ENCODE measurements at regions of chr9 and their contacts with region 1.

Region 1: GRCh38 chr9:87497604-87498045 is at the start of gene DAPK1:
- DNase-seq: no peak
- ATAC-seq: peak; percentile 75
- H3K4me3 ChIP-seq: peak within 1 kb of the TSS; percentile 82
- H3K27ac ChIP-seq: peak within 1 kb of the TSS; percentile 85
- H3K4me1 ChIP-seq: peaks cover 11% of the 10 kb centered on the region
- H3K27me3 ChIP-seq: no peaks in the 10 kb centered on the region
- CTCF ChIP-seq: peak in 2 of 3 experiments; percentile 34 to 39; a peak in 2 of 6 replicates
- EP300 ChIP-seq: 0 out of 4 replicates have a peak, but pooled peaks of 1 of the 2 experiments have one; percentile 24
- POLR2A ChIP-seq: peak; percentile 75
- RAD21 ChIP-seq: no peak
- polyA plus RNA-seq, gene DAPK1: 8.2 to 10.4 TPM

Region 2: DNA sequence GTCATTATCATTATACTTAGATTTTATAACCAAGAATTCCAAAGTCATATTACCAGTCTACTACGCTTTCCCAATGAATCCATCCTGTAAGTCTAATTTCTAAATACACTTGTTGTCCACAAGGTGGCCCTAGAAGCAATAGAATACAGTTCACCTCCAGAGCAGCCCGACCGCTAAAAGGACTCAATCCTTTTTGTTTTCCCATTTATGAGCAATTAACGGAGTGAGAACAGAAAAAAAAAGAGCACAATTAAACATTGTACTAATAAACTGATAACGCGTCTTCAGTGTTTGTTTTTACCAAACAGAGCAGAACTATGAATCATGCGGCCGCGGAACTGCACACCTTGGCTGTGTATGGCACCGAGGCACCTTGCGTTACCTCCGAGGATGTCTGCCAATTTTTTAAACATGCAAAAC is 160.7 kb before region 1 on chr9:
- CTCF ChIA-PET with region 1: interaction called, 6 read pairs
- POLR2A ChIA-PET with region 1: no interaction called
- RAD21 ChIA-PET with region 1: interaction called, 4 read pairs
- SMC1A ChIA-PET with region 1: interaction called, 11 read pairs
- in situ Hi-C with region 1: no loop called
- intact Hi-C with region 1: loop called (anchors 2 kb)
- DNase-seq: peak; percentile 13
- ATAC-seq: peak; percentile 86
- H3K4me3 ChIP-seq: peak overlapping the region; percentile 8; the same call in 1 of the 2 replicates
- H3K27ac ChIP-seq: no peak overlapping the region
- H3K4me1 ChIP-seq: peaks cover 4% of the 10 kb centered on the region; the same call in 1 of the 2 replicates
- H3K27me3 ChIP-seq: no peaks in the 10 kb centered on the region
- CTCF ChIP-seq: peak; percentile 47 to 65 (median 52)
- EP300 ChIP-seq: no peak
- POLR2A ChIP-seq: no peak
- RAD21 ChIP-seq: peak; percentile 92

Region 3: DNA sequence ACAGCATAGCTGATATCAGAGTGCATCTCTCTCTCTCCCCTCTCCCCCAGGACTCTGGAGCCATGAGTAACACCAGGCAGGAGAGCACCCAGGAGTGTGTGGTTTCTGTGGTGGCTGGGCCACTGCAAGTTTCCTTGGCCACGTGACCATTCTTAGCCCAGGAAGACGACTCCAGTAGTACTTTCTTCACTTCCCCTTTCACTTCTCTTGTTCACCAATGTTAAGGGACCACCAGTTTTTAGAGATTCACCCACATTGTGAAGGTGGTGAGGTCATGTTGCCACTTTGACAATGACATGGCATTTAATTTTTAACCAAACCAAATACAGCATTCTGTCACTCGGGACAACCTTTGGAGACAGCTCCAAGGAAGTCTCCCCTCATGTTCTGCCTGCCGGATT is 17.8 kb before region 1 on chr9:
- CTCF ChIA-PET with region 1: interaction called, 14 read pairs
- POLR2A ChIA-PET with region 1: interaction called, 12 read pairs
- RAD21 ChIA-PET with region 1: interaction called, 25 read pairs
- SMC1A ChIA-PET with region 1: interaction called, 17 read pairs
- in situ Hi-C with region 1: no loop called
- intact Hi-C with region 1: no loop called
- DNase-seq: peak; percentile 86
- ATAC-seq: peak; percentile 98
- H3K4me3 ChIP-seq: no peak overlapping the region; the same call in 1 of the 2 replicates
- H3K27ac ChIP-seq: peak overlapping the region; percentile 57
- H3K4me1 ChIP-seq: peaks cover 10% of the 10 kb centered on the region
- H3K27me3 ChIP-seq: no peaks in the 10 kb centered on the region
- CTCF ChIP-seq: no peak
- EP300 ChIP-seq: peak; percentile 61 to 88; a peak in 3 of 4 replicates
- POLR2A ChIP-seq: no peak
- RAD21 ChIP-seq: no peak

Region 4: DNA sequence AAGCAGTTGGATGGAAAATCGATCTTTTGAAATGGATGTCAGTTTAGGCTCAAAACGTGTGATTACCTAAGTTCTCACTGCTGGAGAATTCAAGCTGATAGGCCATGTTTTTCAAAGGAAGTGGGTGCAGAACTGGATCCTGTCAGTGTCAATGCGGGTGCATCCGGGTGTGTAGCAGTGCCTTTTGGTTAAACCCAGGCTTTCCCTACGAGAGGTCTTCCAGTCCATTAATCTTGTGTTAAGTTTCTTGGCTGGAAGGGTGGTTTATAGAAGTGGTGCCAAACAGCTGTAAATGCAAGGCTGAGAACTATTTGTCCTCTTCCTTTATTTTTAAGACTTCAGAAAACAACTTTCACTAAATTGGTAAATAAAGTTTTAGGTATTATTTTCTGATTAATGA is 71.9 kb after region 1 on chr9:
- CTCF ChIA-PET with region 1: interaction called, 5 read pairs
- POLR2A ChIA-PET with region 1: interaction called, 3 read pairs
- RAD21 ChIA-PET with region 1: interaction called, 15 read pairs
- SMC1A ChIA-PET with region 1: interaction called, 8 read pairs
- in situ Hi-C with region 1: no loop called
- intact Hi-C with region 1: no loop called
- DNase-seq: no peak
- ATAC-seq: peak; percentile 63
- H3K4me3 ChIP-seq: no peak overlapping the region
- H3K27ac ChIP-seq: peak overlapping the region; percentile 28; the same call in 1 of the 2 replicates
- H3K4me1 ChIP-seq: peaks cover 27% of the 10 kb centered on the region
- H3K27me3 ChIP-seq: no peaks in the 10 kb centered on the region
- CTCF ChIP-seq: no peak
- EP300 ChIP-seq: no peak
- POLR2A ChIP-seq: no peak
- RAD21 ChIP-seq: no peak

Region 5: GRCh38 chr9:87662808-87663528 is 165.3 kb after region 1 on chr9:
- CTCF ChIA-PET with region 1: interaction called, 7 read pairs
- POLR2A ChIA-PET with region 1: no interaction called
- RAD21 ChIA-PET with region 1: interaction called, 3 read pairs
- SMC1A ChIA-PET with region 1: interaction called, 9 read pairs
- in situ Hi-C with region 1: no loop called
- intact Hi-C with region 1: loop called (anchors 5 kb)
- DNase-seq: no peak
- ATAC-seq: peak; percentile 88
- H3K4me3 ChIP-seq: no peak overlapping the region
- H3K27ac ChIP-seq: no peak overlapping the region
- H3K4me1 ChIP-seq: no peaks in the 10 kb centered on the region
- H3K27me3 ChIP-seq: no peaks in the 10 kb centered on the region
- CTCF ChIP-seq: peak; percentile 78 to 85 (median 81)
- EP300 ChIP-seq: no peak
- POLR2A ChIP-seq: no peak
- RAD21 ChIP-seq: peak; percentile 87